Right ventricle myocardium inferior (tissue), 1 donor: ENCODE measurements at regions of chr1 and their contacts with region 1.

Region 1: DNA sequence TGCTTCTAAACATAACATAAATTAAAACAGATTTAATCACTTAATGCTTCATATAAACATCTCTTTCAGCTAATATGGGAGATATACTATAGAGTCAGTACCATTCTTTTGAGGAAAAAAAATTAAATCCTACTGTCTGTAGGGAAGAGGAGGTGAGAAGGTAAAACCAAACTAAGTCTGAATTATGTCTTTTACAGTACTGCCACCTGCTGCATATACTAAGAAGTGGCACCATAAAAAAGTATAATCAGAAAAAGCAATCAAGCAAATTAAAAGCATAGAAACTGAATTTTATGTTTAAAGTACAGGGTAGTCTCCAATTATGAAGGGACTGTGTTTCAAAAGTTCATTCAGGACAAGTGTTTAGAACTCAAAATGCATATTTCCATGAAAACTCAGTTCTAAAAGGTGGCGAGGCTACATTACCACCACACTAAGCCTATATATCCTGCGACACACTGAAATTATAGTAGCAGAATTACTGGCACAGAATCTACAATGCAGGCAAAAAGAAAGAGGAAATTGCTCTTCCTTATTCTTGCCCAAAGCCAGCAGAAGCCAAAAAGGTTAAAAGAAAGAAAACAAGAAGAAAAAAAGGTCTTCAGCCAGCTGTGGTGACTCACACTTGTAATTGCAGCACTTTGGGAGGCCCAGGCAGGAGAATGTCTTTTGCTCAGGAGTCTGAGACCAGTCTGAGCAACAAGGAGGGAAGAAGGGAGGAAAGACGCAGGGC is 9.0 kb downstream of the NSL1 start:
- DNase-seq: no peak
- ATAC-seq: peak; percentile 52

Region 2: DNA sequence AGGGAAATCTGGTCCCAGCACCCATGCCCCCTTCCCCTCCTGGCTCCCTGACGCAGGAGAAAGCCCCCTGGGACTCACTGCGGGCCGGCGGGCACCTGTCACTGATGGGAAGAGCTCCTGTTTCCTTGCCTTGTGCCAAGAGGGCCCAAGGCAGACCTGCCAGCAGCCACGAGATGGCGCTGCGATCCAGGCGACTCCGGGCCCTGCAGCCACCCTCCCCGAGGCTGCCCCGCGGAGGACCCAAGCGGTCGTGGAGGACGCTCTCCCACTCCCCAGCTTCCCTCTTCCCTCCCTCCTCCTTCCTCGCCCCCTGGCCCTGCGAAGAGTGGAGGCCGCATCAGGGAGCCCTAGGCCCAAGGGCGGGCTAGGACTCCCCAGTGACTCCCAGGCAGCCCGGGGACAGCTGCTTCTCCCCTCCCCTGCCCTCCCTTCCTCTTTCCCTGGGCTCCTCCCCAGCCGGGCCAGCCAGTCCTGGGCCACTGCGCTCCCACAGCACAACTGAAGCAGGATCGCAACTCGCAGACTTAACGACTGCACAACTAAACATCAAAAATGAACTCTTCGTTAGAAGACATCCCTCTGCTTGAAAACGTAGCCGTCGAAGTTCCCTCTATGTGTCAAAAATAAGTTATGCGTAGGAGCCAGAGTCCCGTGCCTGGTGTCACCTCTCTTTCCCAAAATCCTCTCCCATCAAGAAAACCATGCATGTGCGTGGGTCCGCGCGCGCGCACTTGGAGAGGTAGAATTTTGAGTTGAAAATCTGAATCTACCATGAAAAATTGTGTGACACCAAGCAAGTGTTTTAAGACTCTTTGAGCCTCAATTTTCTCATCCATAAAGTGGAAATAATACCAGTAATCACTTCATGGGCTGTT is 117.1 kb before region 1 on chr1:
- intact Hi-C with region 1: loop called (anchors 5 kb)
- DNase-seq: peak; percentile 93
- ATAC-seq: peak; percentile 98